ENCODE measurements at regions of chr10 and their contacts with region 1.

Region 1: DNA sequence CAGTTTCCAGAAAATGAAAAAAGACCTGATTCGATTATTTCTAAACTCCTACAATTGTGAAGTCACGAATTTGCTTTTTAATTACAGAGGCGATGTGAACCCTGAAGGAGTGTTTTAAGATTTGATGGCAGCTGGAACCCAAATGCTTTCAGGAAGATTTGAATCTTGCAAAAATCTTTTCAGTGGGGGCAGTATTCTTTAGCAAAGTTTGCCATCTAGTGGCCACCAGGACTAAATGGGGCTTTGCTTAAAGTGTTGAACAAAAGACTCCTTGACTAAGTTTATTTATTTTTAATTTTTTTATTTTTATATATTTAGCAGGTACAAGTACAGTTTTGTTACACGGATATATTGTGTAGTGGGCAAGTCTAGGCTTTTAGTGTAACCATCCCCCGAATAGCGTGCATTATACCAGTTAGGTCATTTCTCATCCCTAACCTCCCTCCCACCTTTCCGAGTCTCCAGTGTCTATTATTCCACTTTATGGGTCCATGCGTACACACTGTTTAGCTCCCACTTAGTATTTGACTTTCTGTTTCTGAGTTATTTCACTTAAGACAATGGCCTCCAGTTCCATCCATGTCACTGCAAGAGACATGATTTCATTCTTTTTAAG is 98.8 kb downstream of the CACNB2 start:
- DNase-seq: no peak
- H3K4me3 ChIP-seq: no peak overlapping the region
- H3K27ac ChIP-seq: peak overlapping the region in 1 of 4 donors; percentile 7
- H3K4me1 ChIP-seq: peaks cover 0 to 6% (median 0%) of the 10 kb centered on the region in 4 donors
- H3K27me3 ChIP-seq: no peaks in the 10 kb centered on the region
- CTCF ChIP-seq: peak; percentile 50 to 71 (median 60)
- EP300 ChIP-seq: no peak
- POLR2A ChIP-seq: no peak

Region 2: DNA sequence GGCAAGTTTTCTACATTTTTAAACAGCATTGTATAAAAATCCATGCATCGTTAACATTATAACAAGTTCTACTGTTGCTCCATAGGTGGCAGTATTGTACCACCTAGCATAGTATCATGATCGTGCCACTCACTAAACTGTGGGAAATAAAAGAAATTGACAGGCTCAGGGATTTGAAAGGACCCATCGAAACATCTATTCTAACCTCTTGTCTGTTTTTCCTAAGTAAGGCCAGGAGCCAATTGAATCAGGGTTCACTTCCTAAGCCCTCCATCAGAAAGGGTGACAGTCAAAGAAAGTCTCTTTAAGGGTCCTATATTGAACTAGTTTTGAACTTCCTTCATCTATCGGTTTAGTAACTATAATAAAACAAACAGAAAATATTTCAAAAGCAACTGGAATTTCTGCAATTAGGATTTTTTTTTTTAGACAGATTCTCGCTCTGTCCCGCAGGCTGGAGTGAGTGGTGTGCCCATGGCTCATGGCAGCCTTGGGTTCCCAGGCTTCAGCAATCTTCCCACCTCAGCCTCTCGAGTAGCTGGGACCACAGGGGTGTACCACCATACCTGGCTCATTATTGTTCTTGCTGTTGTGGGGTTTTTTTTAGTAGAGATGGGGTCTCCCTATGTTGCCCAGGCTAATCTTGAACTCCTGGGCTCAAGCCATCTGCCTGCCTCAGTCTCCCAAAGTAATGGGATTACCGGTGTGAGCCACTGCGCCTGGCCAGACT is 631.2 kb before region 1 on chr10:
- in situ Hi-C with region 1: loop called in 2 of 4 experiments (anchors 10 to 25 kb)
- intact Hi-C with region 1: no loop called
- DNase-seq: no peak
- H3K4me3 ChIP-seq: no peak overlapping the region
- H3K27ac ChIP-seq: no peak overlapping the region
- H3K4me1 ChIP-seq: peaks cover 0 to 11% (median 6%) of the 10 kb centered on the region in 4 donors
- H3K27me3 ChIP-seq: no peaks in the 10 kb centered on the region
- CTCF ChIP-seq: peak; percentile 82 to 90 (median 84)
- EP300 ChIP-seq: no peak
- POLR2A ChIP-seq: no peak

Region 3: DNA sequence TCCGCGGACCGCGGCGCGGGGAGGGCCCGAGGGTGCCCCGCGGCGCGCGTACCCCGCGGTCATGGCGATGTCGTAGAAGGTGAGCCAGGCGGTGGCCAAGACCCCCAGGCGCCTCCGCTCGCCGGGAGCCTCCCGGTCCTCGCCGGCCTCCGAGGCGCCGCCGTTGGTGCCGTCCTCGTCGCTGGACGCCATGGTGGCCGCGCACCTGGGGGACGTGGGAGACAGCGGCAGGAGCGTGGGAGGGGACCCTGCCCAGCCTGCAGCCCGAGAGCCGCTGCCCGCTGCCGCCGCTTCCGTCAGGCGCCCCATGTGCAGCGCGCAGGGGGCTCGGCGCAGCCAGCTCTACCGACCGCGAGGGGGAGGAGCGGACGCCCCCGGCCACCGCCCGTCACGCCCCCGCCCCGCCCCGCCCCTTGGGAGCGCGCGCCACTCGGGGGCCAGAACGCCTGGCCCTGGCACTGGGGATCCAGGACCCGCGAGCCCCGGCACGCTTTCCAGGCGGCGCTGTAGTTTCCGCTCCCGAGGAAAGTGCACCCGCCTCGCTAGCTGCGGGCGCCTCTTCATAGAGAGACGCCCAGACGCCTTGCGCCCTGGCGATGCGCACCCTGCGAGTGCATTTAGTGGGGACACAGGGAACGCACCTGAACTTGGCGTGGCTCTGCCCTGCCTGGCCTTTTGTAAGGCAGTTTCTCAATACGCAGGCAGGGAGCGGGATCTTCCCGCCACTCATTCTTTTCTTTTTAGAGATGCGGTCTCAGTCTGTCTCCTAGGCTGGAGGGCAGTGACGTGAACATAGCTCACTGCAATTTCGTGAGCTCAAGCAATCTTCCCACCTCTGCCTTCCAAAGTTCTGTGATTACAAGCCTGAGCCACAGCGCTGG is 621.7 kb before region 1 on chr10 and contains the start of gene HACD1:
- in situ Hi-C with region 1: loop called in 1 of 4 experiments (anchors 25 kb)
- intact Hi-C with region 1: no loop called
- DNase-seq: peak; percentile 73
- H3K4me3 ChIP-seq: peak within 1 kb of the TSS; percentile 80 to 94 (median 82)
- H3K27ac ChIP-seq: peak within 1 kb of the TSS; percentile 84 to 93 (median 91)
- H3K4me1 ChIP-seq: peaks cover 0 to 8% (median 6%) of the 10 kb centered on the region in 4 donors
- H3K27me3 ChIP-seq: peaks cover 22% of the 10 kb centered on the region
- CTCF ChIP-seq: peak in 2 of 5 experiments; percentile 12 to 13
- EP300 ChIP-seq: no peak
- POLR2A ChIP-seq: peak; percentile 35
- total RNA-seq, gene HACD1: 6.7 to 52.3 (median 16.5) TPM in 3 of 4 donors, not detected in the other

Region 4: DNA sequence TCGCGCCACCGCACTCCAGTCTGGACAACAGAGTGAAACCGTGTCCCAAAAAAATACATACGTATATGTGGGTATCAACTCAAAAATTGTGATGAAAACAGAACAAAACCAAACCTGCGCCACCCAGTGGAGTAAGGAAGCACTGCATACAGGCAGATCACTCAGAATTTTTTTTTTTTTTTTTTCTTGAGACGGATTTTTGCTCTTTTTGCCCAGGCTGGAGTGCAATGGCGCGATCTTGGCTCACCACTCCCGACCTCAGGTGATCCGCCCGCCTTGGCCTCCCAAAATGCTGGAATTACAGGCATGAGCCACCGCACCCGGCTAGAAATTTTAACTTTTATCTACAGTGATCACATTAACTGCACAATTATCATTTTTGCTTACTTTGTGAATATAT is 496.1 kb before region 1 on chr10:
- in situ Hi-C with region 1: loop called in 2 of 4 experiments (anchors 25 kb)
- intact Hi-C with region 1: no loop called
- DNase-seq: peak; percentile 66
- H3K4me3 ChIP-seq: no peak overlapping the region
- H3K27ac ChIP-seq: no peak overlapping the region
- H3K4me1 ChIP-seq: peaks cover 0 to 20% (median 9%) of the 10 kb centered on the region in 4 donors
- H3K27me3 ChIP-seq: no peaks in the 10 kb centered on the region
- CTCF ChIP-seq: peak; percentile 87 to 97 (median 89)
- EP300 ChIP-seq: no peak
- POLR2A ChIP-seq: no peak

Region 5: GRCh38 chr10:17847585-17848296 is 391.2 kb before region 1 on chr10:
- in situ Hi-C with region 1: loop called in 2 of 4 experiments (anchors 10 kb)
- intact Hi-C with region 1: no loop called
- DNase-seq: no peak
- H3K4me3 ChIP-seq: no peak overlapping the region
- H3K27ac ChIP-seq: no peak overlapping the region
- H3K4me1 ChIP-seq: peaks cover 0 to 3% (median 0%) of the 10 kb centered on the region in 4 donors
- H3K27me3 ChIP-seq: no peaks in the 10 kb centered on the region
- CTCF ChIP-seq: peak; percentile 18 to 38 (median 36)
- EP300 ChIP-seq: no peak
- POLR2A ChIP-seq: no peak

Region 6: GRCh38 chr10:18104223-18104872 is 134.6 kb before region 1 on chr10:
- in situ Hi-C with region 1: no loop called
- intact Hi-C with region 1: no loop called
- DNase-seq: peak; percentile 56
- H3K4me3 ChIP-seq: no peak overlapping the region
- H3K27ac ChIP-seq: no peak overlapping the region
- H3K4me1 ChIP-seq: no peaks in the 10 kb centered on the region
- H3K27me3 ChIP-seq: no peaks in the 10 kb centered on the region
- CTCF ChIP-seq: peak; percentile 55 to 73 (median 64)
- EP300 ChIP-seq: no peak
- POLR2A ChIP-seq: no peak

Region 7: DNA sequence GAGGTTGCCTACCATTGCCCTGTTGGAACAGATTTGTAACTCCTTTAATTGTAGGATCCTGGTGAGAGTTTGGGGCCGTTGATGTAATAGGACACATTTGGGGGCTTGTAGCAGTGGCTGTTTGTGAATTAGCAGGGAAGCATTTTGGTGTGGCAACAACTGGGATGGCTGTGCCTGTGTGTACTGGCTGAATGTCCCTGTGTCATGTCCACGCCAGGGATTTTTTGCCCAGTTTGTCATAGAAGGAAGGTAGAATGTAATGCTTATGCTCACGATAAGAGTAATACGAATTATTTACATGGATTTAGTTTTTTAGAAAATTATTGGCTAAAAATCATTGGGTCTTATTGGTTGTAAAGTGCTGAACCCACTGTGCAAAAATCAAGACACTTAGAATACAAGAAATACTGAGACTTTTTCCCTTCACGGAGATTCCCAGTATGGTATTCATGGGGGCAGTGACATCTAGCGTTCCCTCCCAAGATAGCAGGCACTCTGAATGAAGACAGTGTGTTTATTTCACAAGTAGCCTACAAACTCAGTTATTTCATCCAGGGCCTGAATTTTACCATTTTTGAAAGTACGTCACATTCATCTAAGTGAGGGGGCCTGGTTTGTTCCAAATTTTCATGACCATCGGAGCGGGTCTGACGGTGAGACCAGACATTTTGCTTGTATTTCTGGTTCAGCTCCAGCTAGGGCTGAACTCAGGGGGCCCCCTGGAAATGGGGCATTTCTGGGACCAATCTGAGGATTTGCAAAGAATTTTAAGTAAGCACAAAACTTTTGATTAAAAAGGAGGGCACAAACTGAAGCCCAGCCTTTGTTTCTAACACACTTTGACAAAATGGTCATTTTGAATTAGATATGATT is 24.1 kb before region 1 on chr10:
- in situ Hi-C with region 1: no loop called
- intact Hi-C with region 1: no loop called
- DNase-seq: peak; percentile 60
- H3K4me3 ChIP-seq: no peak overlapping the region
- H3K27ac ChIP-seq: peak overlapping the region in 1 of 4 donors; percentile 19
- H3K4me1 ChIP-seq: peaks cover 0 to 11% (median 8%) of the 10 kb centered on the region in 4 donors
- H3K27me3 ChIP-seq: no peaks in the 10 kb centered on the region
- CTCF ChIP-seq: peak; percentile 74 to 85 (median 77)
- EP300 ChIP-seq: no peak
- POLR2A ChIP-seq: no peak